ENCODE measurements at regions of chr1 and their contacts with region 1.

Region 1: GRCh38 chr1:229258031-229258756 is 12.7 kb upstream of the RAB4A start:
- DNase-seq: no peak
- H3K4me3 ChIP-seq: no peak overlapping the region
- H3K27ac ChIP-seq: no peak overlapping the region
- H3K4me1 ChIP-seq: peaks cover 6% of the 10 kb centered on the region
- H3K27me3 ChIP-seq: no peaks in the 10 kb centered on the region
- CTCF ChIP-seq: peak; percentile 68 to 70

Region 2: DNA sequence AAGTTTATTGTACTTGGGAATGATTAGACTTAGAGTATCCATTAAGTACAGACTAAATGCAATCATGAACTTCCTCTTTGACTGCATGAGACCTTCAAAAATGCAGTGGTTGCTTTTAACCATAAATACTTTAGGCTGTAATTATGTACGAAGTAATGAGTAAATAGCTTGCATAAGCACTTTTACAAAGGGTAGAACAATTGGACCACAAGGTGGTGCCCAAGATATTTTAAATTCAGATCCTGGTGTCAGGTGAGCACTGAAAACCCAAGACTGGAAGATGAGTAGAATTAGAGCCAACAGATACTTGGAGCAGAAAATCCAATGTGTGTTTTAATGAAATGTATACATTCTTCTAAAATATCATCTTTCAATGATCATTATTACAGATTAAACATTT is 566.3 kb before region 1 on chr1:
- CTCF ChIA-PET with region 1: no interaction called
- dilution Hi-C with region 1: no loop called
- in situ Hi-C with region 1: loop called (anchors 5 to 10 kb)
- intact Hi-C with region 1: loop called (anchors 1 kb)
- DNase-seq: peak; percentile 43
- H3K4me3 ChIP-seq: no peak overlapping the region
- H3K27ac ChIP-seq: no peak overlapping the region
- H3K4me1 ChIP-seq: no peaks in the 10 kb centered on the region
- H3K27me3 ChIP-seq: peaks cover 2% of the 10 kb centered on the region
- CTCF ChIP-seq: peak; percentile 36 to 61

Region 3: DNA sequence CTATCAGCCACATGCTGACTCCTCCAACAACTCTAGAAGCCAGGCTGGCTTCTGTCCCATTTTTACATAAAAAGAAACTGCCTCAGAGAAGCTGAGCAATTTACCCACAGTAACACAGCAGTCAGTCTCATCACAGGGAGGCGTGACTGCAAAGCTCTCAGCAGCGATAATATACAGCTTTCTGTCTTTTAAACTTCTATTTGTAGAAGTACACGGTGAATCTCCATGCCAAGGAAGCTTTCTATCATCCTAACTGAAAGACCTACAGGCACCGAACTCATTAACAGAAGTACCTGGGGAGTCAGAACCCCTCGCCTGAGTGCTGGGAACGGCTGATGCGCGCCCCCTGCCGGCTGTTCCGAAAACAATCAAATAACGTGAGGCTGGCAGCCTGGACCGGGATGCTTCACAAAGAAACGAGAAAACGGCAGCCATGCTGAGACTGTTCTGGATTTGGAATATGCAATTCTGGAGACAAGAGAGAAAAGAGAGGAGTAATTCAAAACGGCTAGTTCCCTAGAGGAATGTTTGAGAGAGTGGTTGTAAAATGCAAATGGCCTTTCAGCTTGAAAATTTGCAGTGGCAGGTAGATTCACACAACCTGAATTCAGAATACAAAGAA is 30.8 kb before region 1 on chr1:
- CTCF ChIA-PET with region 1: interaction called, 4 read pairs
- dilution Hi-C with region 1: no loop called
- in situ Hi-C with region 1: no loop called
- intact Hi-C with region 1: loop called (anchors 1 kb)
- DNase-seq: peak; percentile 62
- H3K4me3 ChIP-seq: no peak overlapping the region
- H3K27ac ChIP-seq: no peak overlapping the region
- H3K4me1 ChIP-seq: peaks cover 57% of the 10 kb centered on the region
- H3K27me3 ChIP-seq: no peaks in the 10 kb centered on the region
- CTCF ChIP-seq: peak; percentile 59 to 94

Region 4: GRCh38 chr1:229287267-229287666 is 29.1 kb after region 1 on chr1:
- CTCF ChIA-PET with region 1: no interaction called
- dilution Hi-C with region 1: no loop called
- in situ Hi-C with region 1: no loop called
- intact Hi-C with region 1: no loop called
- DNase-seq: peak; percentile 72
- H3K4me3 ChIP-seq: no peak overlapping the region
- H3K27ac ChIP-seq: peak overlapping the region; percentile 24
- H3K4me1 ChIP-seq: peaks cover 12% of the 10 kb centered on the region
- H3K27me3 ChIP-seq: no peaks in the 10 kb centered on the region
- CTCF ChIP-seq: no peak

Region 5: GRCh38 chr1:229479660-229480399 is 221.6 kb after region 1 on chr1:
- CTCF ChIA-PET with region 1: interaction called, 11 read pairs
- dilution Hi-C with region 1: loop called (anchors 25 kb)
- in situ Hi-C with region 1: loop called (anchors 5 kb)
- intact Hi-C with region 1: loop called (anchors 1 kb)
- DNase-seq: no peak
- H3K4me3 ChIP-seq: no peak overlapping the region
- H3K27ac ChIP-seq: no peak overlapping the region
- H3K4me1 ChIP-seq: no peaks in the 10 kb centered on the region
- H3K27me3 ChIP-seq: no peaks in the 10 kb centered on the region
- CTCF ChIP-seq: no peak

Region 6: DNA sequence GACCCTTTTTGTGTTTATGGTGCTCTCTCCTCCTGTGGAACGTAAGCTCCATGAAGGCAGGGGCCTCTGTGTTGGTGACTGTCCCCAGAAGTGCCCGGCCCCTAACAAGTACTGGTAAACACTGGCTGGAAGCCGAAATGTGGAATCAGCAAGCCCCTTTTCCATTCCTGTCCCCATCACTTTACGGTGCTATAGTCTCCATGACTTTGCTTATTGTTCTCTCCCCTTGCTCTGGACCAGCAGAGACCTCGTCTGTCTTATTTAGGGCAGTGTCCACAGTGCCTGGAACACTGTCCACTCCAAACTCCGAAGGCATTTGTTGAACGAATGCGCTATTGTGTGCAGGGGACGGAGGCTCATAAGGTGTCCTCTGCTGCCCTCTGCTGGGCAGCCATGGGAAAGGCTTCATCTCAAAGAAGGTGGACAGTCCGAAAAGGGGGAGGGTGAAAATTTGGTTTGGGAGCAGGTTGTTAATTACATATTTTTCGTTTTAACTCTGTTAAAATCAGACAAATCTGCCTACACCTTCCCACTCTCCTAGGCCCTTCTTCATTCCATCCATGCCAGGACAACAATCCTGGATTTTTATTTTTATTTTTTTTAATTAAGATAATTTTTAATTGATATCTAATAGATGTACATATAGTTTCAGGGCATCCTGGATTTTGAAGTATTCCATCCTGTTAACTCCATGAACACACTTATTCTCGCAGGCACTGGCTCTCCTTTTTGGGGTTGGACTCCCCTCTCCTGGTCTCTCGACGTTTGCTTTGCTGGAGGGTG is 1052.4 kb after region 1 on chr1:
- CTCF ChIA-PET with region 1: no interaction called
- dilution Hi-C with region 1: no loop called
- in situ Hi-C with region 1: loop called in 1 of 2 experiments (anchors 25 kb)
- intact Hi-C with region 1: loop called (anchors 1 kb)
- DNase-seq: peak; percentile 51
- H3K4me3 ChIP-seq: no peak overlapping the region
- H3K27ac ChIP-seq: no peak overlapping the region
- H3K4me1 ChIP-seq: peaks cover 13% of the 10 kb centered on the region
- H3K27me3 ChIP-seq: no peaks in the 10 kb centered on the region
- CTCF ChIP-seq: peak; percentile 85 to 94

Measured in mammary epithelial cell (primary cell).